ENCODE measurements at regions of chr15 and their contacts with region 1.

Region 1: DNA sequence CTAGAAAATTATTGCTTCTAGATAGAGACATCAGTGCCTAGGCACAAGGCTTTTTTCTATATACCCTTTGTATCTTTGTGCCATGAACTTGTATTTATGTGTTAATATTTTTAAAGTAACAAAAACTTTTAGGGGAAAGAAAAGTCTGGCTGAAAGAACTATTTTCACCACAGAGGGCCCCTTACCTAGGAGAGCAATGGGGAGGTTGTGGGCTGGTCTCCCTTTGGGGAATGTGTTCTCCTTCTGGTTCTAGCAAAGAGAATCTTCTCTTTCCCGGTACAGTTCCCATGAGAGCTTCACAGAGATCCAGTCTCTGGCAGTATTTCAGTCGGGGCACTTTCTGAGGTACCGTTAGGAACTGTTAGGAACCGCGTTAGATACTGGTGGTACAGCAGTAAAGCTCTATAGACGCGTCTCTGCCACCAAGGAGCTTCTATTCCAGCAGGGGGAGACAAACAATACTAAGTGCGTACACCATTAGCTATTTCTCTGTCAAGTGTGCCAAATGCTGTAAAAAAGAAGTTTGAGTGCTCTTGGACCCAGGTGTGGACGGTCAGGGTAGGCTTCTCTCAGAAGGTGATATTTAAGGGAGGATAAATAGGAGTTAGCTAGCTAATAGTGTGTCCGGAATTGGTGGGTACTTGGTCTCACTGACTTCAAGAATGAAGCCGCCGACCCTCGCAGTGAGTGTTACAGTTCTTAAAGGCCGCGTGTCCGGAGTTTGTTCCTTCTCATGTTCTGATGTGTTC is 4.6 kb upstream of the EPB42 start:
- DNase-seq: no peak
- ATAC-seq: peak; percentile 87

Region 2: GRCh38 chr15:42749266-42749665 is 476.1 kb before region 1 on chr15:
- intact Hi-C with region 1: no loop called
- DNase-seq: no peak
- ATAC-seq: no peak

Region 3: DNA sequence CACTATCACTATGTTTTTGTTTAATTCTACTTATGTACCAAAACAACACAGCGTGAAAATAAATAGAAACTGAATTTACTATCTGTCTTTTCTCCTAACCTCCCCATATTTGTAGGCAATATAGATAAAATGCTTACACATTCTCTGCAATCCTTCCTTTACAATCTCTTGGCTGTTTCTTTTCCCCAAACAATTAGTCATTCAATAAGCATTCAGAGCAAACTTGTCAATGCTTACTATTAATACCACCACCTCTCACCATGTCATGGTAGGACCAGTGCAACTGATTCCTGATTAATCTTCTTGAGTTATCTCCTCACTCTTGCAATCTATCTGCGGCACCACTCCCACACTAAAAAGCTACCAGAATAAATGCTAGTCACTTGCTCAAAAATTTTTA is 230.8 kb before region 1 on chr15:
- intact Hi-C with region 1: no loop called
- DNase-seq: no peak
- ATAC-seq: no peak

Region 4: GRCh38 chr15:43056696-43057095 is 168.7 kb before region 1 on chr15:
- intact Hi-C with region 1: no loop called
- DNase-seq: no peak
- ATAC-seq: no peak

Region 5: GRCh38 chr15:43285609-43286037 is 60.2 kb after region 1 on chr15:
- intact Hi-C with region 1: loop called (anchors 2 kb)
- DNase-seq: no peak
- ATAC-seq: peak; percentile 77

Region 6: DNA sequence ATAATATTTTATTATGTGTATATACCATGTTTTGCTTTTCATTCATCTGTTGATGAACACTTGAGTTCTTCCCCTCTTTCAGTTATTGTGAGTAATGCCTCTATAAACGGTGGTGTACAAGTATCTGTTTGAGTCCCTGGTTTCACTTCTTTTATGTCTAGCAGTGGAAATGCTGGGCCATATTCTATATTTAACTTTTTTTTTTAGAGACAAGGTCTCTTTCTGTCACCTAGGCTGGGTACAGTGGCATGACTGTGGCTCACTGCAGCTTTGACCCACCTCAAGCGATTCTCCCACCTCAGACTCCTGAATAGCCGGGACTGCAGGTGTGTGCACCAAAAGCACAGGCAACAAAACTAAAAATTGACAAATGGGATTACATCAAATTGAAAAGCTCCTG is 1083.0 kb after region 1 on chr15:
- intact Hi-C with region 1: no loop called
- DNase-seq: no peak
- ATAC-seq: no peak

Measured in Right ventricle myocardium superior (tissue), 1 donor.